Posterior vena cava (tissue), 2 donors: ENCODE measurements at regions of chr19 and their contacts with region 1.

Region 1: GRCh38 chr19:3984908-3985642 is at the start of gene EEF2:
- DNase-seq: peak; percentile 97
- total RNA-seq, gene EEF2: 1,536 to 1,555 TPM

Region 2: GRCh38 chr19:4199699-4200293 is 214.7 kb after region 1 on chr19:
- intact Hi-C with region 1: loop called (anchors 5 to 10 kb)
- DNase-seq: no peak

Region 3: GRCh38 chr19:4208385-4209094 is 223.5 kb after region 1 on chr19:
- intact Hi-C with region 1: loop called (anchors 5 to 10 kb)
- DNase-seq: no peak